PC-3 (cell line): ENCODE measurements at regions of chr6 and their contacts with region 1.

Region 1: GRCh38 chr6:72553531-72554511 is 68.0 kb upstream of the KCNQ5 start:
- DNase-seq: peak; percentile 85
- ATAC-seq: peak; percentile 84
- H3K4me3 ChIP-seq: peak overlapping the region; percentile 48
- H3K27ac ChIP-seq: peak overlapping the region; percentile 98
- H3K4me1 ChIP-seq: peaks cover 57% of the 10 kb centered on the region
- H3K27me3 ChIP-seq: no peaks in the 10 kb centered on the region
- CTCF ChIP-seq: no peak

Region 2: GRCh38 chr6:72411872-72412708 is 141.7 kb before region 1 on chr6:
- CTCF ChIA-PET with region 1: no interaction called
- POLR2A ChIA-PET with region 1: no interaction called
- intact Hi-C with region 1: loop called (anchors 5 kb)
- DNase-seq: peak; percentile 80
- ATAC-seq: peak; percentile 85
- H3K4me3 ChIP-seq: no peak overlapping the region
- H3K27ac ChIP-seq: no peak overlapping the region
- H3K4me1 ChIP-seq: peaks cover 7% of the 10 kb centered on the region
- H3K27me3 ChIP-seq: no peaks in the 10 kb centered on the region
- CTCF ChIP-seq: peak; percentile 99

Region 3: GRCh38 chr6:72425003-72425681 is 128.7 kb before region 1 on chr6:
- CTCF ChIA-PET with region 1: no interaction called
- POLR2A ChIA-PET with region 1: no interaction called
- intact Hi-C with region 1: no loop called
- DNase-seq: peak; percentile 8
- ATAC-seq: no peak
- H3K4me3 ChIP-seq: no peak overlapping the region
- H3K27ac ChIP-seq: no peak overlapping the region
- H3K4me1 ChIP-seq: no peaks in the 10 kb centered on the region
- H3K27me3 ChIP-seq: no peaks in the 10 kb centered on the region
- CTCF ChIP-seq: no peak

Region 4: GRCh38 chr6:72564231-72564630 is 10.4 kb after region 1 on chr6:
- CTCF ChIA-PET with region 1: no interaction called
- POLR2A ChIA-PET with region 1: no interaction called
- intact Hi-C with region 1: loop called (anchors 1 kb)
- DNase-seq: peak; percentile 46
- ATAC-seq: peak; percentile 95
- H3K4me3 ChIP-seq: no peak overlapping the region
- H3K27ac ChIP-seq: peak overlapping the region; percentile 43
- H3K4me1 ChIP-seq: peaks cover 14% of the 10 kb centered on the region
- H3K27me3 ChIP-seq: no peaks in the 10 kb centered on the region
- CTCF ChIP-seq: no peak

Region 5: GRCh38 chr6:73074175-73074574 is 520.4 kb after region 1 on chr6:
- CTCF ChIA-PET with region 1: no interaction called
- POLR2A ChIA-PET with region 1: no interaction called
- intact Hi-C with region 1: loop called (anchors 5 kb)
- DNase-seq: peak; percentile 91
- ATAC-seq: peak; percentile 83
- H3K4me3 ChIP-seq: no peak overlapping the region
- H3K27ac ChIP-seq: peak overlapping the region; percentile 95
- H3K4me1 ChIP-seq: peaks cover 53% of the 10 kb centered on the region
- H3K27me3 ChIP-seq: no peaks in the 10 kb centered on the region
- CTCF ChIP-seq: no peak

Region 6: GRCh38 chr6:73451223-73452107 is 897.6 kb after region 1 on chr6:
- CTCF ChIA-PET with region 1: no interaction called
- POLR2A ChIA-PET with region 1: no interaction called
- intact Hi-C with region 1: loop called (anchors 5 kb)
- DNase-seq: peak; percentile 35
- ATAC-seq: peak; percentile 60
- H3K4me3 ChIP-seq: peak overlapping the region; percentile 99
- H3K27ac ChIP-seq: peak overlapping the region; percentile 76
- H3K4me1 ChIP-seq: no peaks in the 10 kb centered on the region
- H3K27me3 ChIP-seq: no peaks in the 10 kb centered on the region
- CTCF ChIP-seq: no peak